ENCODE measurements at regions of chr13 and their contacts with region 1.

Region 1: GRCh38 chr13:113970810-113971470 is 2.9 kb downstream of the C13orf46 start:
- DNase-seq: no peak
- ATAC-seq: no peak
- H3K4me3 ChIP-seq: no peak overlapping the region
- H3K27ac ChIP-seq: no peak overlapping the region
- H3K4me1 ChIP-seq: no peaks in the 10 kb centered on the region
- H3K27me3 ChIP-seq: no peaks in the 10 kb centered on the region
- CTCF ChIP-seq: no peak
- EP300 ChIP-seq: no peak
- POLR2A ChIP-seq: no peak
- RAD21 ChIP-seq: no peak

Region 2: DNA sequence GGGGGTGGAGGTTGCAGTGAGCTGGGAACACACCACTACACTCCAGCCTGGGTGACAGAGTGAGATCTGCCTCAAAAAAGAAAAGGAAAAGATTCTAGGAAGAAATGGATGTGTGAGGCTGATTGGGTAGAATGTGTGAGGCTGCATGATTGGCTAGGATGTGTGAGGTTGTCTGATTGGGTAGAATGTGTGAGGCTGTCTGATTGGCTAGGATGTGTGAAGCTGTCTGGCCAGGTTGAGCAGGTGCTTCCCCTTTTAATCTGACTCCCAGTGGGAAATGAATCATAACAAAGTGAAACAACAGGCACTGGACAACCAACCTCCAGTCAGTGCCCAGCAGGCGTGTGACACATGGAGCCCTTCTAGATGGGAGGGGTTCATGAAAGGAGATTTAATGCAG is 11.7 kb before region 1 on chr13:
- CTCF ChIA-PET with region 1: no interaction called
- POLR2A ChIA-PET with region 1: no interaction called
- RAD21 ChIA-PET with region 1: no interaction called
- SMC1A ChIA-PET with region 1: no interaction called
- in situ Hi-C with region 1: no loop called
- intact Hi-C with region 1: no loop called
- DNase-seq: no peak
- ATAC-seq: no peak
- H3K4me3 ChIP-seq: no peak overlapping the region
- H3K27ac ChIP-seq: no peak overlapping the region
- H3K4me1 ChIP-seq: no peaks in the 10 kb centered on the region
- H3K27me3 ChIP-seq: no peaks in the 10 kb centered on the region
- CTCF ChIP-seq: no peak
- EP300 ChIP-seq: no peak
- POLR2A ChIP-seq: no peak
- RAD21 ChIP-seq: no peak

Region 3: GRCh38 chr13:114010401-114011101 is 39.6 kb after region 1 on chr13:
- CTCF ChIA-PET with region 1: no interaction called
- POLR2A ChIA-PET with region 1: no interaction called
- RAD21 ChIA-PET with region 1: no interaction called
- SMC1A ChIA-PET with region 1: no interaction called
- in situ Hi-C with region 1: loop called (anchors 5 kb)
- intact Hi-C with region 1: no loop called
- DNase-seq: no peak
- ATAC-seq: no peak
- H3K4me3 ChIP-seq: no peak overlapping the region
- H3K27ac ChIP-seq: no peak overlapping the region
- H3K4me1 ChIP-seq: no peaks in the 10 kb centered on the region
- H3K27me3 ChIP-seq: no peaks in the 10 kb centered on the region
- CTCF ChIP-seq: no peak
- EP300 ChIP-seq: no peak
- POLR2A ChIP-seq: no peak
- RAD21 ChIP-seq: no peak